ENCODE measurements at regions of chr1 and their contacts with region 1.

Region 1: GRCh38 chr1:84862810-84863251 is 30.2 kb downstream of the LPAR3 start:
- DNase-seq: peak; percentile 91
- H3K4me3 Mint-ChIP-seq: peak overlapping the region; percentile 74
- H3K27ac Mint-ChIP-seq: peak overlapping the region; percentile 83
- H3K4me1 Mint-ChIP-seq: peaks cover 43% of the 10 kb centered on the region
- H3K27me3 Mint-ChIP-seq: peaks cover 1% of the 10 kb centered on the region

Region 2: DNA sequence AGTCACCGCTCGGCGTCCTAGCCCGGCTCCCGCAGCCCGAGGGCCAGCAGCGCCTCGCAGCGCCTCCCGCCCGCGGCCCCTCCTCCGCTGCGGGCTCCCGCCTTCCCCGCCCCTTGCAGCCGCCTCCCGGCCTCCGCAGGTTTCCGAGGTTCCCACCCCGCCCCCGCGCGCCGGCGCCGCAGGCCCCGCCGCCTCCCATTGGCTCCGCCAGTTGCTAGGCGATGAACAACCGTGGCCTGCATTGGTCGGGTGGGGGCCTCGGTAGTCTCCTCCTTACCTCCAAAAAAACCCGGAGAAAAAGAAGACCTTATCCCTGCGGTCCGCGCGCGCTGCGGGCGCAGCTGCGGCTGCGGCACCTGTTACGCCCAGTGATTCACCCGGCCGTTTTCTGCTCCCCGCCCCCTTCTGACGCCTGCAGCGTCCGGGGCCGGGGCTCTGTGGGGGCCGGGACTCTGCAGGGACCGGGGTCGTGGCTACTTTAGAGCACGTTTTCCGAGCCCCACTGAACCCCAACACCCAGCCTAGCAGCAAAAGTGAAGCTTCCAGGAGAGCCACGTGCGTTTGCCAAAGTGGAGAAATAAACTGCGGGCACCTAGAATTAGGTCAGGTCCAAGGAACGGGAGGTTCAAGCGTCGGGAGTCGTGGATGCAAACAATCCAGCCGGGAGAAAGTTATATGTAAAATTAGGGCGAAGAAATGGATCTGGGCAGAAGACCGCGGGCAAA is 172.3 kb before region 1 on chr1 and contains the start of gene SSX2IP:
- intact Hi-C with region 1: loop called (anchors 5 kb)
- DNase-seq: peak; percentile 100
- H3K4me3 Mint-ChIP-seq: peak within 1 kb of the TSS; percentile 98
- H3K27ac Mint-ChIP-seq: peak within 1 kb of the TSS; percentile 95
- H3K4me1 Mint-ChIP-seq: peaks cover 43% of the 10 kb centered on the region
- H3K27me3 Mint-ChIP-seq: peaks cover 4% of the 10 kb centered on the region
- total RNA-seq, gene SSX2IP: 10.0 and 11.8 TPM in 2 replicates

Region 3: DNA sequence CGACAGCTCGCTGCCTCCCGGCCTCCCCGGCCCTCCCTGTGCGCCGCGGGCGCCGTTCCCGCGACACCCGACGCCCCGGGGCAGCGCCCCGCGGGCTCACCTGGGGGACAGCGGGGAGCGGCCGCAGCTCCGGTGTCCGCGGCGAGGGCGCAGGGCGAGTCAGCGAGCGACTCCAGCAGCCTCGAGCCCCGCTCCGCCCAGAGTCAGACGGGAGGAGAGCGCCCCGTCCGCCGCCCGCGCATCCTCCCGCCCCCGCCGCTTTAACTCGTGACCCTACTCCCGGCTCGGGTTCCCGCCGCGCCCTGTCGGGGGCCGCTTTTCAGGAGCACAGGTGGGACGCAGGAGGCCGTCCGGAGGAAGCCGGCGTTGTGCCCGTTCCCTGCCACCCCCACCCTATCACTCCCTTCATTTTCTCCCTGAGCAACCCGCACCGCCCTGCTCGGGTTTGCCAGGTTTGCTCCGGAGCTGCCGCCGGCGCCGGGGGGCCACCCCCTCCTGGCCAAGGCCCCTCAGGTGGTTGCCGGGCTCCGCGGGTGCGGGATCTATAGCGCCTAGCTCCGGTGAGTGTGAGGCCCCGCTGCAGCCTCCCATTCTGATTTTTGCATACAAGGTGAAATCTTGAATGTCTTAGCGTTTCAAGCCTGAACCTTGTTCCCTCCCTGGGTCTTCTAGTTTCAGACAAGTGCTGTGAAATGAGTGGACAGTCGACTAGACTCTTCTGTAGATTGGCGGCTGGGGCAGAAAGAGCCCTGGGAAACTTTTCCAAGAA is 185.6 kb after region 1 on chr1 and contains the start of gene MCOLN3:
- intact Hi-C with region 1: loop called (anchors 1 kb)
- DNase-seq: peak; percentile 83
- H3K4me3 Mint-ChIP-seq: peak within 1 kb of the TSS; percentile 70
- H3K27ac Mint-ChIP-seq: peak within 1 kb of the TSS; percentile 21
- H3K4me1 Mint-ChIP-seq: peaks cover 26% of the 10 kb centered on the region
- H3K27me3 Mint-ChIP-seq: peaks cover 44% of the 10 kb centered on the region
- total RNA-seq, gene MCOLN3: 0.51 and 0.66 TPM in 2 replicates

Region 4: GRCh38 chr1:85276215-85276977 is 413.6 kb after region 1 on chr1 and contains the start of gene BCL10:
- intact Hi-C with region 1: loop called (anchors 5 kb)
- DNase-seq: peak; percentile 100
- H3K4me3 Mint-ChIP-seq: peak within 1 kb of the TSS; percentile 84
- H3K27ac Mint-ChIP-seq: peak within 1 kb of the TSS; percentile 91
- H3K4me1 Mint-ChIP-seq: peaks cover 46% of the 10 kb centered on the region
- H3K27me3 Mint-ChIP-seq: peaks cover 20% of the 10 kb centered on the region
- total RNA-seq, gene BCL10: 25.5 and 27.8 TPM in 2 replicates